ENCODE measurements at regions of chr12 and their contacts with region 1.

Region 1: DNA sequence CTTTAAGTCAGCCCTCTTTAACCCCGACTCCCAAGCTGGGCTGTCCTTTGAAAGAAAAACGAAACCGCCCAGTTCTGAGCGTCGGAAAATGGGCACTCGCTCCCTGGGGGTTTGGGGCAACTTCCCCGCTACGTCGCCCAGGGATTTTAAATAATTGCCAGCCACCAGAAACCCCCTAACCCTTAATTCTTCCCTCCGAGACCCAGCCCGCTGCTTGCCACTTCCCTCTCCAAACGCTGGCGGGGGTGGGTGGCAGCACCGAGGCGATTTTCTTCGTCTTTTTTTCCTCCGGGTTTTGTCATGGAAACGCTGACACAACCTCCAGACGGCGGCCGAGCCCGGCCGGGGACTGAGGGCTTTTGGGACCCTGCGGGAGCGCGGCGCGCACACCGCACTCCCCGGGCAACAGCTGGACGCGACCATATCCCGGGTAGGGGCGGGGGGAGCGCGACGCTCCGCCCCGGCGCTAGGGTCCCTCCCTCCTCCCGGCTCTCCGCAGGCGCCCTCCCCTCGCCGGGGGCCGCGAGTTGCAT is at the start of gene CHST11:
- DNase-seq: peak; percentile 85
- ATAC-seq: peak; percentile 80
- H3K4me3 ChIP-seq: peak within 1 kb of the TSS; percentile 94
- H3K27ac ChIP-seq: no peak within 1 kb of the TSS
- H3K4me1 ChIP-seq: peaks cover 39% of the 10 kb centered on the region
- H3K27me3 ChIP-seq: no peaks in the 10 kb centered on the region
- CTCF ChIP-seq: no peak; the same call in 1 of the 2 replicates
- total RNA-seq, gene CHST11: 53.5 and 56.7 TPM in 2 replicates

Region 2: GRCh38 chr12:103197725-103198388 is 1258.6 kb before region 1 on chr12:
- CTCF ChIA-PET with region 1: no interaction called
- POLR2A ChIA-PET with region 1: no interaction called
- intact Hi-C with region 1: no loop called
- DNase-seq: no peak
- ATAC-seq: no peak
- H3K4me3 ChIP-seq: no peak overlapping the region
- H3K27ac ChIP-seq: no peak overlapping the region
- H3K4me1 ChIP-seq: no peaks in the 10 kb centered on the region
- H3K27me3 ChIP-seq: no peaks in the 10 kb centered on the region
- CTCF ChIP-seq: no peak

Region 3: GRCh38 chr12:104427011-104427461 is 29.4 kb before region 1 on chr12:
- CTCF ChIA-PET with region 1: no interaction called
- POLR2A ChIA-PET with region 1: no interaction called
- intact Hi-C with region 1: loop called (anchors 1 kb)
- DNase-seq: peak; percentile 89
- ATAC-seq: peak; percentile 88
- H3K4me3 ChIP-seq: no peak overlapping the region
- H3K27ac ChIP-seq: no peak overlapping the region
- H3K4me1 ChIP-seq: peaks cover 33% of the 10 kb centered on the region
- H3K27me3 ChIP-seq: no peaks in the 10 kb centered on the region
- CTCF ChIP-seq: no peak

Region 4: GRCh38 chr12:104588068-104588920 is 131.8 kb after region 1 on chr12:
- CTCF ChIA-PET with region 1: no interaction called
- POLR2A ChIA-PET with region 1: no interaction called
- intact Hi-C with region 1: loop called (anchors 1 kb)
- DNase-seq: peak; percentile 98
- ATAC-seq: peak; percentile 92
- H3K4me3 ChIP-seq: peak overlapping the region; percentile 59
- H3K27ac ChIP-seq: peak overlapping the region; percentile 85
- H3K4me1 ChIP-seq: peaks cover 51% of the 10 kb centered on the region
- H3K27me3 ChIP-seq: no peaks in the 10 kb centered on the region
- CTCF ChIP-seq: no peak

Region 5: DNA sequence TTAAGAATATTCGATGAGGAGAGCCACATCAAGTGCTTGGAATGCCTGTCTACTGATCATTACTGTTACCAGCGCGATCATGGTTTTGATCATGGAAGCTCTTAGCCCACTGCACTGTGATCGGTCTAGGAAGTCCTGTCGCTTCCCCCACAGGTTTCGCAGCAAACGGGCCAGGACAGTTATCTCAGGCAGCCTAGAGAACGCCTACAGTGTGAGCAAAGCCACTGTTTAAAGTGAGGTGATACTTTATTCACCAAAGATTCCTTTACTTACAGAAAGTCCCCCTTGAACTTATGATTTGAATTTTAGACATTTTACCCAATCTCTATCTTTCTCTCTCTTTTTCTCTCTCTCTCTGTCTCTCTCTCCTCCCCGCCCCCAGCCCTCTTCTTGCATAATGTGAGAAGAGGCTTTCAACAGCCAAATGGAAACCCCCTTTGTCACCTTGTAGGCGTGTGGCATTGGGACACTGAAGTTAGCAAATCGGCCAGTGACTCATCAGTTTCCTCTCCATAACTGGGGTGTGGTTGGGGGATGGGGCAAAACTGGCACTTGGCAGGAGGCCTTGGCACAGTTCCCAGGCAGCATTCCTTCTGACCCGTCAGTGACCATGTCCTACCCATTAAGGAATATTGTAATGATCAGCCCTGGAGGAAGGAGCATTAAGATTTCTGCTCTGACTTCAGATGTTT is 215.1 kb after region 1 on chr12:
- CTCF ChIA-PET with region 1: no interaction called
- POLR2A ChIA-PET with region 1: no interaction called
- intact Hi-C with region 1: loop called (anchors 5 kb)
- DNase-seq: peak; percentile 100
- ATAC-seq: peak; percentile 80
- H3K4me3 ChIP-seq: peak overlapping the region; percentile 49; the same call in 1 of the 2 replicates
- H3K27ac ChIP-seq: peak overlapping the region; percentile 77
- H3K4me1 ChIP-seq: peaks cover 48% of the 10 kb centered on the region
- H3K27me3 ChIP-seq: no peaks in the 10 kb centered on the region
- CTCF ChIP-seq: no peak

Region 6: GRCh38 chr12:104710940-104711689 is 254.6 kb after region 1 on chr12:
- CTCF ChIA-PET with region 1: no interaction called
- POLR2A ChIA-PET with region 1: no interaction called
- intact Hi-C with region 1: no loop called
- DNase-seq: peak; percentile 48
- ATAC-seq: peak; percentile 71
- H3K4me3 ChIP-seq: no peak overlapping the region
- H3K27ac ChIP-seq: no peak overlapping the region
- H3K4me1 ChIP-seq: peaks cover 5% of the 10 kb centered on the region; the same call in 1 of the 2 replicates
- H3K27me3 ChIP-seq: no peaks in the 10 kb centered on the region
- CTCF ChIP-seq: no peak

Region 7: DNA sequence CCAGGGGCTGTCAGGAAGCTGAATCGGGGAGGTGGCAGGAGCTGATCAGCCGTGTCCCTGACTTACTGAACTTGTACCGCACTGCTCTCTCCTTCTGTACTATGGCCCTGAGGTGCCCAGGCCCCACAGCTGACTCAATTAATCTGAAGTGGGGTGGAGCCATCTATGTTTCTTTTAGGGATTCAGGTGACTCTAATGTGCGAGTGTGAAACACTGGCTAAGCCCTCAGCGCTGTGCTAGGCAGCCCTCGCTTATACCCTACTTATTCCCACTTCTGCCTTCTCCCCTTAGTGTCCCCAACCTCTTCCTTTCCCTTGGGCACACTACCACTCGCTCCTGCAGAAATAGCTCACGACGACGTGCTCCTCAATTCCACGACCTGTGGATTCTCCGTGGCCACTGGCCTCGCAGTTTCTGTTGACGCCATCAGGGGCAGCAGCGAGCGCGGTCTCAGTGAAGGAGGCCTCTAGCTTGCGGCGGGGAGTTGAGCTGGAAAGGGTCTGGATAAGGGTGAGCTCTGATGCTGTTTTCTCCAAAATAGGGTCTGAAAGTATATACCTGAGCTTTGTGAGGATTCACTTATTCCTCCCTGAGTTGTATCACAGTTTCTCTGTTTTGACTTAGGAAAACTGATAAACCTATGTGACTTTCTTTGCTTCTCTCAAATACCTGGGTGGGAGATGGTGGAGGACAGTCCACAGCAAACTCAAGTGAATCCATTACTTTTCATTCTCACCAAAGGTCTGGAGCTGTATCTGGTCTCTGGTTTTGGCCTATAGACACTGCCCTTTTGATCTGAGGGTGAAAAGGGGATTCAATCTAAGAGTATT is 334.0 kb after region 1 on chr12:
- CTCF ChIA-PET with region 1: no interaction called
- POLR2A ChIA-PET with region 1: no interaction called
- intact Hi-C with region 1: loop called (anchors 10 kb)
- DNase-seq: peak; percentile 31
- ATAC-seq: no peak
- H3K4me3 ChIP-seq: no peak overlapping the region
- H3K27ac ChIP-seq: no peak overlapping the region
- H3K4me1 ChIP-seq: peaks cover 13% of the 10 kb centered on the region
- H3K27me3 ChIP-seq: no peaks in the 10 kb centered on the region
- CTCF ChIP-seq: peak; percentile 77